Activated T-helper 1 cell treated with anti-CD3 and anti-CD28 coated beads, Interleukin-12 subunit alpha, Interleukin-12 subunit beta, Interleukin-2, Interleukin-4 antibody, amounts not matched to agents 30 ng/mL and 10 ng/mL and 1 ng/mL, durations not matched to agents 14 hours and 24 hours and 36 hours (primary cell): ENCODE measurements at regions of chr4 and their contacts with region 1.

Region 1: GRCh38 chr4:118076958-118077766 is 42.9 kb downstream of the NDST3 start:
- DNase-seq: peak; percentile 2
- H3K4me3 Mint-ChIP-seq: no peak overlapping the region
- H3K27ac Mint-ChIP-seq: no peak overlapping the region
- H3K4me1 Mint-ChIP-seq: no peaks in the 10 kb centered on the region
- H3K27me3 Mint-ChIP-seq: peaks cover 3% of the 10 kb centered on the region

Region 2: DNA sequence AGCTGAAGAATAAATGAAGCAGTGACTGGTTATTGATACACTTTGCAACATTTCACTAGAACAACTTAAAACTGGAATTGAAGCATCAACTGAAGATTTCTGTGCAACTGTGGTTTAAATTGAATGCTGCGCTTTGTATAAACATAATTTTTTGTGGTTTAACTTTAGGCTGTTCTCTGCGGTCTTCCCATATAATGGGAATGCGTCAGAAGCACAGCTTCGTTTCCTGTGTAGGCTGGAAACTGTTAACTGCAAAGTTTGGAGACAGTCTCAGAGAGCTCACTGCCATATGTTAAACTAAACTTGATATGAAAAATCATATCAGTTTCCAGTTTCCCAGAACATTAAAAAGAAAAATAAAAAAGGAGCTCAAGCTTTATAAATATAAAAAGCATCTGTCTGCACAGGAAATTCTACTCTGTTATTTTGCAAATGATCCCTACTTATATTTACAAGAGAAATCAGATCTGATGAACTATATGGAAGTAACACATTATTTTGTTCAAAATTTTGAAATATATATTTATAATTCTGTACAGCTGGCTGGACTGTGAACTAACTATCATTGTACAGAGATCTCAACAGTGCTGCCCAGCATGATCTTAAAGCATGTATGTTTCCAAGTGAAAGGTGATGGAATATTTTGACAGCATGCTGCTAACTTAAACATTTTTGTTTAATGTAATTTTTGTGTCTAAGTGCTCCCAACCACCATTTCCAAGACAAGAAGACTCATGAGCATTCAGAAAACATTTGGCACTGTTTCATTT is 97.0 kb after region 1 on chr4:
- intact Hi-C with region 1: loop called (anchors 5 kb)
- DNase-seq: no peak
- H3K4me3 Mint-ChIP-seq: no peak overlapping the region
- H3K27ac Mint-ChIP-seq: no peak overlapping the region
- H3K4me1 Mint-ChIP-seq: peaks cover 40% of the 10 kb centered on the region
- H3K27me3 Mint-ChIP-seq: no peaks in the 10 kb centered on the region

Region 3: DNA sequence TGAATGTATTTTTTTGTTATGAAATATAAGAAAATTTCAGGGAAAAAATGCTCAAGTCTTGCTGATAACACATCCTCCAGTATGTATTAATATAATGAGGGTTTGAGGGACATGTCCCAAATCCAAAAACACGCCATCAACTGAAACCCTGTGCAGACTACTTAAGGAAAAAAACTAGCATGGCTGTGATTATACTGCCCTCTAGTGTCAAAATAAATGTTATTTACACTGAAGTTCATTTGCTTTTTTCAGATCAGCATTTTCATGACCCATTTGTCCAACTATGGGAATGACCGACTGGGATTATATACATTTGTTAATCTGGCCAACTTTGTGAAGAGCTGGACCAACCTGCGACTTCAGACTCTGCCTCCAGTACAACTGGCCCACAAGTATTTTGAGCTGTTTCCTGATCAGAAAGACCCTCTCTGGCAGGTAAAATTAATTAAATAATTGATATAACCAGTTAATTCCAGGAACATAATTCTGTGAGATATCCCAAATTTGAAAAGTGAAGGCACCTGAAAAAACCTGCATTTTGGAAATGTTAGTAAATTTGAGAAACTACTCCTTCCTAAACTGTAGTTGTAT is 147.2 kb after region 1 on chr4:
- intact Hi-C with region 1: loop called (anchors 1 kb)
- DNase-seq: no peak
- H3K4me3 Mint-ChIP-seq: no peak overlapping the region
- H3K27ac Mint-ChIP-seq: no peak overlapping the region
- H3K4me1 Mint-ChIP-seq: no peaks in the 10 kb centered on the region
- H3K27me3 Mint-ChIP-seq: peaks cover 3% of the 10 kb centered on the region

Region 4: GRCh38 chr4:118270492-118270891 is 193.3 kb after region 1 on chr4:
- intact Hi-C with region 1: loop called (anchors 1 kb)
- DNase-seq: no peak
- H3K4me3 Mint-ChIP-seq: no peak overlapping the region
- H3K27ac Mint-ChIP-seq: no peak overlapping the region
- H3K4me1 Mint-ChIP-seq: no peaks in the 10 kb centered on the region
- H3K27me3 Mint-ChIP-seq: peaks cover 5% of the 10 kb centered on the region